ENCODE measurements at regions of chr10 and their contacts with region 1.

Region 1: GRCh38 chr10:124647421-124648130 is 96.6 kb downstream of the FAM53B start:
- DNase-seq: peak; percentile 86 to 92 (median 91)
- H3K4me3 ChIP-seq: peak overlapping the region in 5 of 7 experiments; percentile 16 to 60 (median 40)
- H3K27ac ChIP-seq: peak overlapping the region; percentile 46 to 72
- H3K4me1 ChIP-seq: peaks cover 16 to 87% (median 69%) of the 10 kb centered on the region in 4 experiments
- H3K27me3 ChIP-seq: no peaks in the 10 kb centered on the region

Region 2: DNA sequence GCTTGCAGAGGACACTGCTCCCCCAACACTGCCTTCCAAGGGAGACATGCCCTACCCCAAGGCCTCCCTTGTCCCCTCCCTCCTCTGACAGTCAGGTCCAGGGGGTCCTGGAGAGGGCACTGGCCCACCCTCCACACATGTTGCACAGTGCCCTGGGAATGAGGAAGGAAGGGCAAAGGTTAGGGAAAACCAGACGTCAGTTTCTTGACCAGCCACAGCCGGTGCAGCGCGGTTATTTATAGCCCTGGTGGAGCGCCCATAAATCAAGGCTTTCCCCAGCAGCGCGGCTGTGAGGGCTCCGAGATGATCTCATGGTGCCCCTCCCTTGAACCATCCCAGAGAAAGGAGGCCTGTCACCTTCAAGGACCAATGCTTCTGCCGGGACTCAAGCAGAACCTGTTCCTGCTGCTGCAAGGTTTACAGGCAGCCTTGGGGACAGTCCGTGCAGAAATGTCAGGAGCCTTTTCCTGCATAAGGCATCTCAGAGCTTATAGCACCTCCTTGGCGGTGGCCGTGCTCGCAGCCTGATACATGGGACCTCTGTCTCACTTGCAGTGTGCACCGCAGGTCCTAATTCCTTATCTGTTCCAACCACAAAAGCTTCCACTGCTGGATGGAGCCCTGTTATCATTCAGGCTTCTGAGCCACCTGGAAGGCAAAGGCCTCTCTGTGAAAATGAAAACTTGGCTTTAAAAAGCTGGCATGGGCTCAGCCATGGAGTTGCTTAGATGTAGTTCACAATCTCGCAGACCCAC is 58.7 kb before region 1 on chr10:
- CTCF ChIA-PET with region 1: no interaction called
- POLR2A ChIA-PET with region 1: no interaction called
- DNase-seq: peak; percentile 31 to 74 (median 62)
- H3K4me3 ChIP-seq: peak overlapping the region in 2 of 7 experiments; percentile 32 to 40
- H3K27ac ChIP-seq: no peak overlapping the region
- H3K4me1 ChIP-seq: peaks cover 0 to 17% (median 14%) of the 10 kb centered on the region in 4 experiments
- H3K27me3 ChIP-seq: peaks cover 0 to 3% (median 0%) of the 10 kb centered on the region in 5 experiments

Region 3: GRCh38 chr10:124659380-124659779 is 11.8 kb after region 1 on chr10:
- CTCF ChIA-PET with region 1: interaction called, 18 read pairs
- POLR2A ChIA-PET with region 1: no interaction called
- DNase-seq: no peak
- H3K4me3 ChIP-seq: no peak overlapping the region
- H3K27ac ChIP-seq: no peak overlapping the region
- H3K4me1 ChIP-seq: peaks cover 0 to 34% (median 15%) of the 10 kb centered on the region in 4 experiments
- H3K27me3 ChIP-seq: no peaks in the 10 kb centered on the region

Measured in common myeloid progenitor, CD34-positive (primary cell).